ENCODE measurements at regions of chr7 and their contacts with region 1.

Region 1: GRCh38 chr7:138981332-138982203 is at the start of gene KIAA1549:
- DNase-seq: peak; percentile 59 to 80 (median 74)
- H3K4me3 ChIP-seq: peak within 1 kb of the TSS; percentile 18 to 79 (median 50)
- H3K27ac ChIP-seq: peak within 1 kb of the TSS in 3 of 5 donors; percentile 18 to 84 (median 71)
- H3K4me1 ChIP-seq: peaks cover 9 to 21% of the 10 kb centered on the region in 2 donors
- H3K27me3 ChIP-seq: no peaks in the 10 kb centered on the region
- CTCF ChIP-seq: peak in 2 of 6 experiments; percentile 46 to 73
- POLR2A ChIP-seq: peak in 1 of 2 donors; percentile 6
- total RNA-seq, gene KIAA1549: 1.8 to 7.6 (median 3.7) TPM

Region 2: GRCh38 chr7:138886501-138886917 is 95.1 kb before region 1 on chr7:
- intact Hi-C with region 1: loop called in 1 of 2 experiments (anchors 5 kb)
- DNase-seq: peak in 5 of 7 donors; percentile 38 to 64 (median 53)
- H3K4me3 ChIP-seq: no peak overlapping the region
- H3K27ac ChIP-seq: no peak overlapping the region
- H3K4me1 ChIP-seq: peaks cover 4 to 33% of the 10 kb centered on the region in 2 donors
- H3K27me3 ChIP-seq: no peaks in the 10 kb centered on the region
- CTCF ChIP-seq: peak; percentile 51 to 89 (median 76)
- POLR2A ChIP-seq: peak in 1 of 2 donors; percentile 21

Region 3: DNA sequence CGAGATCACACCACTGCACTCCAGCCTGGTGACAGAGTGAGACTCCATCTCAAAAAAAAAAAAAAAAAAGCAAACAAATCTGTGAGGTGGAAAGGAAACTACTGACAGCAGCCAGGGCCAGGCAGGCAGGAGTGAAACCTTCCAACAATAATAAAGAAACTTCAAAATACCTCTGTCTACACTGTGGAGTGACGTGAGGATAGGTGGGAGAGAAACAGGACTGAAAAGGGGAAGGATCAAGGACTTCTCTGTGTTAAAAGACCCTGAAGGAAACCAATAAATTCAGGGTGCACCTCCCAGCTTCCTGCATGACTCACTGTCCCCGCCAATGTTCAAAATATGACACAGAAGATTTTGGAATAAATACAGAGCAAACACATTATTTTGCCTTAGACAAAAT is 83.3 kb before region 1 on chr7:
- intact Hi-C with region 1: loop called (anchors 5 kb)
- DNase-seq: no peak
- H3K4me3 ChIP-seq: no peak overlapping the region
- H3K27ac ChIP-seq: no peak overlapping the region
- H3K4me1 ChIP-seq: no peaks in the 10 kb centered on the region
- H3K27me3 ChIP-seq: no peaks in the 10 kb centered on the region
- CTCF ChIP-seq: no peak
- POLR2A ChIP-seq: no peak

Measured in adrenal gland (tissue), 19 donors.